K562 (cell line): ENCODE measurements at regions of chr7 and their contacts with region 1.

Region 1: GRCh38 chr7:93902777-93903423 is 3.5 kb upstream of the GNGT1 start:
- DNase-seq: peak; percentile 51 to 60 (median 56)
- ATAC-seq: peak; percentile 83
- H3K4me3 ChIP-seq: no peak overlapping the region
- H3K27ac ChIP-seq: no peak overlapping the region
- H3K4me1 ChIP-seq: no peaks in the 10 kb centered on the region
- H3K27me3 ChIP-seq: no peaks in the 10 kb centered on the region
- CTCF ChIP-seq: peak; percentile 65 to 87 (median 79)
- EP300 ChIP-seq: no peak
- POLR2A ChIP-seq: no peak
- RAD21 ChIP-seq: peak; percentile 64 to 80

Region 2: DNA sequence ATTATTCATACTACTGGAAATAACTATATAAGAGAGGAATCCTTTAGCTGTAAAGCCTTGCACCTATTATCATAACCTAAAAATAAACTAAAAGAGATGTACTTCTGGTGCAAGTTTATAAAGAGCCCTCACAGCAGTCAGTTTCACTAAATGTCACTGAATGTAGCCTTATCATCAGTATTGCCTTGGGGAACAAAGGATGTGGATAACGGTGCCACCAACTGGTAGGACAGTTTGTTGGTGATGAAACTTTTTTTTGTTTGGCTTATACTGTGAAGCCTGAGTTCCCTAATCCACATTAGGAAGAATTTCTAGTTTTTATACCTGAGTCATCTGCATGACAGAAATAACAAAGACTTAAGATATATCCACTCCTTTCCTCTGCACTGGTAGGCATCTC is 373.9 kb after region 1 on chr7:
- CTCF ChIA-PET with region 1: no interaction called
- POLR2A ChIA-PET with region 1: no interaction called
- in situ Hi-C with region 1: no loop called
- intact Hi-C with region 1: loop called (anchors 10 kb)
- DNase-seq: no peak
- ATAC-seq: peak; percentile 43; the same call in 1 of the 3 replicates
- H3K4me3 ChIP-seq: no peak overlapping the region
- H3K27ac ChIP-seq: no peak overlapping the region
- H3K4me1 ChIP-seq: no peaks in the 10 kb centered on the region
- H3K27me3 ChIP-seq: no peaks in the 10 kb centered on the region
- CTCF ChIP-seq: peak in 1 of 3 experiments; percentile 38; a peak in 2 of 6 replicates
- EP300 ChIP-seq: no peak
- POLR2A ChIP-seq: no peak
- RAD21 ChIP-seq: peak; percentile 26 to 36; a peak in 3 of 4 replicates